GM12878 (cell line): ENCODE measurements at regions of chr4 and their contacts with region 1.

Region 1: GRCh38 chr4:76960014-76960413 is 10.5 kb downstream of the SEPTIN11 start:
- DNase-seq: peak; percentile 56
- ATAC-seq: peak; percentile 90
- H3K4me3 ChIP-seq: no peak overlapping the region
- H3K27ac ChIP-seq: peak overlapping the region; percentile 0; the same call in 1 of the 2 replicates
- H3K4me1 ChIP-seq: no peaks in the 10 kb centered on the region
- H3K27me3 ChIP-seq: no peaks in the 10 kb centered on the region
- CTCF ChIP-seq: no peak
- EP300 ChIP-seq: peak; percentile 78 to 86; a peak in 3 of 4 replicates
- POLR2A ChIP-seq: no peak
- RAD21 ChIP-seq: peak; percentile 8; the same call in 1 of the 2 replicates

Region 2: GRCh38 chr4:76831711-76832373 is 128.2 kb before region 1 on chr4:
- CTCF ChIA-PET with region 1: no interaction called
- POLR2A ChIA-PET with region 1: no interaction called
- RAD21 ChIA-PET with region 1: no interaction called
- SMC1A ChIA-PET with region 1: no interaction called
- in situ Hi-C with region 1: no loop called
- intact Hi-C with region 1: no loop called
- DNase-seq: no peak
- ATAC-seq: no peak
- H3K4me3 ChIP-seq: no peak overlapping the region
- H3K27ac ChIP-seq: no peak overlapping the region
- H3K4me1 ChIP-seq: no peaks in the 10 kb centered on the region
- H3K27me3 ChIP-seq: no peaks in the 10 kb centered on the region
- CTCF ChIP-seq: no peak
- EP300 ChIP-seq: no peak
- POLR2A ChIP-seq: no peak
- RAD21 ChIP-seq: no peak

Region 3: GRCh38 chr4:76949276-76950051 is 10.6 kb before region 1 on chr4 and contains the start of gene SEPTIN11:
- CTCF ChIA-PET with region 1: interaction called, 4 read pairs
- POLR2A ChIA-PET with region 1: interaction called, 5 read pairs
- RAD21 ChIA-PET with region 1: interaction called, 9 read pairs
- SMC1A ChIA-PET with region 1: interaction called, 19 read pairs
- in situ Hi-C with region 1: no loop called
- intact Hi-C with region 1: no loop called
- DNase-seq: peak; percentile 55
- ATAC-seq: peak; percentile 86
- H3K4me3 ChIP-seq: peak within 1 kb of the TSS; percentile 95
- H3K27ac ChIP-seq: peak within 1 kb of the TSS; percentile 84
- H3K4me1 ChIP-seq: peaks cover 14% of the 10 kb centered on the region; the same call in 1 of the 2 replicates
- H3K27me3 ChIP-seq: no peaks in the 10 kb centered on the region
- CTCF ChIP-seq: no peak
- EP300 ChIP-seq: no peak
- POLR2A ChIP-seq: peak; percentile 97
- RAD21 ChIP-seq: no peak
- polyA plus RNA-seq, gene SEPTIN11: 24.7 to 27.1 TPM

Region 4: GRCh38 chr4:76969941-76970529 is 10.0 kb after region 1 on chr4:
- CTCF ChIA-PET with region 1: interaction called, 3 read pairs
- POLR2A ChIA-PET with region 1: interaction called, 9 read pairs
- RAD21 ChIA-PET with region 1: interaction called, 5 read pairs
- SMC1A ChIA-PET with region 1: interaction called, 20 read pairs
- in situ Hi-C with region 1: no loop called
- intact Hi-C with region 1: no loop called
- DNase-seq: no peak
- ATAC-seq: no peak; the same call in 2 of the 3 replicates
- H3K4me3 ChIP-seq: no peak overlapping the region
- H3K27ac ChIP-seq: no peak overlapping the region
- H3K4me1 ChIP-seq: no peaks in the 10 kb centered on the region; the same call in 1 of the 2 replicates
- H3K27me3 ChIP-seq: no peaks in the 10 kb centered on the region
- CTCF ChIP-seq: no peak
- EP300 ChIP-seq: no peak
- POLR2A ChIP-seq: no peak
- RAD21 ChIP-seq: no peak

Region 5: GRCh38 chr4:76977736-76978350 is 17.8 kb after region 1 on chr4:
- CTCF ChIA-PET with region 1: interaction called, 10 read pairs
- POLR2A ChIA-PET with region 1: interaction called, 9 read pairs
- RAD21 ChIA-PET with region 1: interaction called, 5 read pairs
- SMC1A ChIA-PET with region 1: interaction called, 20 read pairs
- in situ Hi-C with region 1: no loop called
- intact Hi-C with region 1: no loop called
- DNase-seq: no peak
- ATAC-seq: no peak
- H3K4me3 ChIP-seq: no peak overlapping the region
- H3K27ac ChIP-seq: no peak overlapping the region
- H3K4me1 ChIP-seq: peaks cover 14% of the 10 kb centered on the region
- H3K27me3 ChIP-seq: no peaks in the 10 kb centered on the region
- CTCF ChIP-seq: no peak
- EP300 ChIP-seq: no peak
- POLR2A ChIP-seq: no peak
- RAD21 ChIP-seq: no peak

Region 6: GRCh38 chr4:76984127-76984526 is 24.1 kb after region 1 on chr4:
- CTCF ChIA-PET with region 1: interaction called, 10 read pairs
- POLR2A ChIA-PET with region 1: interaction called, 7 read pairs
- RAD21 ChIA-PET with region 1: interaction called, 5 read pairs
- SMC1A ChIA-PET with region 1: interaction called, 12 read pairs
- in situ Hi-C with region 1: no loop called
- intact Hi-C with region 1: no loop called
- DNase-seq: peak; percentile 40
- ATAC-seq: peak; percentile 83
- H3K4me3 ChIP-seq: no peak overlapping the region
- H3K27ac ChIP-seq: peak overlapping the region; percentile 77
- H3K4me1 ChIP-seq: peaks cover 48% of the 10 kb centered on the region
- H3K27me3 ChIP-seq: no peaks in the 10 kb centered on the region
- CTCF ChIP-seq: peak; percentile 40 to 53 (median 40); a peak in 5 of 6 replicates
- EP300 ChIP-seq: no peak; a peak in 1 of 4 replicates
- POLR2A ChIP-seq: no peak
- RAD21 ChIP-seq: peak; percentile 60

Region 7: DNA sequence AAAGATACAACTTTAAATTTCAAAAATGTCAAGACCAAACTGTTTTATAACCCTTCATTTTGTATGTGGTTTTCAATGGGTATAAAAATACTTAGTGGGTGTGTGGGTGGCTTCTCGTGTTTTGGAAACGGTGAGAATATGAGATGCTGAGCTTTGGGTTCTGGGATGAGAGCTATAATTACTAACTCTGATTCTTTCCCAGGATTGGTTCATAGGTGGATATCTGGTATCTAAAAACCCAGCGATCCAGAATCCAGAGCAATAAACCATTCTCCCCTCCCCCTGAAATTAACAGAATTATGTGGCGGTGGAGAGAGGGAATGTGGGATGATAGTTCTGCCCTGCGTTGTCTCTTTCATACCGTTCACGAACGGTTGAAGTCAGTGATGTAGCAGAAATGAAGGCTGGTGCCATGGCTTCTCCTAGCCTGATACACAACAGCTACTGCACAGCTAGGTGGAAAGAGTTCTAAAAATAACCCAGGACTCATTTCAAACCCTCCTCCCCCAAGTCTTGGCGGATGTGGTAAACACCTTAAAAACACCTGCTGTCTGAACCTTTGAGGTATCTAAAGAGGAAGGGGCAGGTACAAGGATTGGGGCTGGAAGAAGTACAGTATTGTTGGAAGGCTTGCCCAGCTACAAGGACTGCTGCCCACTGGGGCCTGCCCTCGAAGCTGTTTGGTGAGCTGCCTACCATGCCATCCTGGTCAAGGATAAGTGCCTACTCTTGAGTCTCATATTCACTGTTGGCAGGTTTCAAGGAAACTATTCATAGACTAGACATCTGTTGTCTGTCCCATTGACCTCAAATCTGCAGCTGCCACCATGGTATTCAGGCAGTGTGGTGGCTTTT is 34.0 kb after region 1 on chr4:
- CTCF ChIA-PET with region 1: interaction called, 5 read pairs
- POLR2A ChIA-PET with region 1: interaction called, 4 read pairs
- RAD21 ChIA-PET with region 1: interaction called, 12 read pairs
- SMC1A ChIA-PET with region 1: interaction called, 10 read pairs
- in situ Hi-C with region 1: no loop called
- intact Hi-C with region 1: no loop called
- DNase-seq: peak; percentile 73
- ATAC-seq: peak; percentile 89
- H3K4me3 ChIP-seq: peak overlapping the region; percentile 53
- H3K27ac ChIP-seq: peak overlapping the region; percentile 89
- H3K4me1 ChIP-seq: peaks cover 38% of the 10 kb centered on the region
- H3K27me3 ChIP-seq: no peaks in the 10 kb centered on the region
- CTCF ChIP-seq: no peak
- EP300 ChIP-seq: peak in 1 of 2 experiments; percentile 69; a peak in 3 of 4 replicates
- POLR2A ChIP-seq: peak; percentile 50
- RAD21 ChIP-seq: no peak; the same call in 1 of the 2 replicates

Region 8: DNA sequence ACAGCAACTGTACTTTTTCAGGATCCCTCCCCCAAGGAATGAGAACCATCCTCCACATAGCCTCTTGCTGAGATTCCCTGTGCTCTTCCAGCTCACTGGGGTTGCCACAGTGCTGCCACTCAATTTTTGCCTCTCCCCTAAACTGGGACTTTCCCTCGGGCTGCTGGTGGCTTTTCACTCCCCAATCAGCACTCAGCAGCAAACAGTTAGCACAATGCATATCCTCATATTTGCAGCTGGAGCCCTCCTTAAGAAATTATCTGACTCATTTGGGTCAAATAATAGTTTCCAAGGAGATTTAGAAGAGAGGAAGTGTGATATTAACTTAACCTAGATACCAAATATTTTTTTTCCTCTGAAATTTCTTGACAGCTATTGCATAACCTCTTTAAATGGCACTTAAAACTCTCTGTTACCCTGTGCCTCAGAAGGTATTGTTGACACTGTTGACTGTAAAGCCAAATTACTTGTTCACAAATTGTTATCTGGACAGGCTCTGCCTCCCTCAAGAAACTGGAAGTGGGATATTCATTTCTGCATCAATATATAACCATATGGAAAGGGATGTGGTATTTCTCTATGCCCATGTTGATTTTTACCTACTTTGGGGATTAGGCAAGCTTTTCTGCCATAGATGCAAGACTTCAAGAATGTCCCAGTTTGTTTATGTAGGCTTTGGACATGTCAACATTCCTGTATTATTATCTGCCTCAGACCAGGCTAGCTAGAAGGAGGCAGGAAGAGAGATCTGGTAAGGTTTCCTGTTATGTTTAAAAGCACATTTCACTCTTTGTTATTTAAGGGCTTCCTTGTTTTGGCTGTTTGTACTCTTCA is 47.6 kb after region 1 on chr4:
- CTCF ChIA-PET with region 1: no interaction called
- POLR2A ChIA-PET with region 1: no interaction called
- RAD21 ChIA-PET with region 1: interaction called, 3 read pairs
- SMC1A ChIA-PET with region 1: interaction called, 10 read pairs
- in situ Hi-C with region 1: no loop called
- intact Hi-C with region 1: no loop called
- DNase-seq: no peak
- ATAC-seq: peak; percentile 82
- H3K4me3 ChIP-seq: no peak overlapping the region
- H3K27ac ChIP-seq: peak overlapping the region; percentile 37; the same call in 1 of the 2 replicates
- H3K4me1 ChIP-seq: peaks cover 13% of the 10 kb centered on the region
- H3K27me3 ChIP-seq: no peaks in the 10 kb centered on the region
- CTCF ChIP-seq: no peak
- EP300 ChIP-seq: no peak
- POLR2A ChIP-seq: no peak
- RAD21 ChIP-seq: no peak